Thyroid gland (tissue), 4 donors: ENCODE measurements at regions of chr3 and their contacts with region 1.

Region 1: GRCh38 chr3:134473868-134474546 is 11.8 kb downstream of the ANAPC13 start:
- DNase-seq: peak; percentile 81 to 88
- H3K4me3 ChIP-seq: no peak overlapping the region
- H3K27ac ChIP-seq: peak overlapping the region in 1 of 3 donors; percentile 52
- H3K4me1 ChIP-seq: peaks cover 3 to 27% of the 10 kb centered on the region in 2 donors
- H3K27me3 ChIP-seq: no peaks in the 10 kb centered on the region
- CTCF ChIP-seq: peak; percentile 40 to 93 (median 80)
- POLR2A ChIP-seq: no peak

Region 2: GRCh38 chr3:134212906-134213665 is 260.9 kb before region 1 on chr3:
- intact Hi-C with region 1: loop called (anchors 10 kb)
- DNase-seq: peak; percentile 84 to 90
- H3K4me3 ChIP-seq: no peak overlapping the region
- H3K27ac ChIP-seq: no peak overlapping the region
- H3K4me1 ChIP-seq: peaks cover 0 to 8% of the 10 kb centered on the region in 2 donors
- H3K27me3 ChIP-seq: no peaks in the 10 kb centered on the region
- CTCF ChIP-seq: peak; percentile 92 to 98 (median 94)
- POLR2A ChIP-seq: no peak

Region 3: GRCh38 chr3:134308350-134308891 is 165.6 kb before region 1 on chr3:
- intact Hi-C with region 1: loop called (anchors 2 kb)
- DNase-seq: peak; percentile 85 to 86
- H3K4me3 ChIP-seq: no peak overlapping the region
- H3K27ac ChIP-seq: peak overlapping the region; percentile 79 to 94 (median 90)
- H3K4me1 ChIP-seq: peaks cover 33 to 50% of the 10 kb centered on the region in 2 donors
- H3K27me3 ChIP-seq: no peaks in the 10 kb centered on the region
- CTCF ChIP-seq: peak; percentile 99 to 100 (median 100)
- POLR2A ChIP-seq: no peak

Region 4: GRCh38 chr3:134378384-134378783 is 95.6 kb before region 1 on chr3:
- intact Hi-C with region 1: loop called (anchors 5 kb)
- DNase-seq: peak; percentile 76 to 78
- H3K4me3 ChIP-seq: no peak overlapping the region
- H3K27ac ChIP-seq: peak overlapping the region in 1 of 3 donors; percentile 15
- H3K4me1 ChIP-seq: peaks cover 22 to 33% of the 10 kb centered on the region in 2 donors
- H3K27me3 ChIP-seq: no peaks in the 10 kb centered on the region
- CTCF ChIP-seq: peak in 4 of 6 experiments; percentile 55 to 66 (median 60)
- POLR2A ChIP-seq: no peak

Region 5: DNA sequence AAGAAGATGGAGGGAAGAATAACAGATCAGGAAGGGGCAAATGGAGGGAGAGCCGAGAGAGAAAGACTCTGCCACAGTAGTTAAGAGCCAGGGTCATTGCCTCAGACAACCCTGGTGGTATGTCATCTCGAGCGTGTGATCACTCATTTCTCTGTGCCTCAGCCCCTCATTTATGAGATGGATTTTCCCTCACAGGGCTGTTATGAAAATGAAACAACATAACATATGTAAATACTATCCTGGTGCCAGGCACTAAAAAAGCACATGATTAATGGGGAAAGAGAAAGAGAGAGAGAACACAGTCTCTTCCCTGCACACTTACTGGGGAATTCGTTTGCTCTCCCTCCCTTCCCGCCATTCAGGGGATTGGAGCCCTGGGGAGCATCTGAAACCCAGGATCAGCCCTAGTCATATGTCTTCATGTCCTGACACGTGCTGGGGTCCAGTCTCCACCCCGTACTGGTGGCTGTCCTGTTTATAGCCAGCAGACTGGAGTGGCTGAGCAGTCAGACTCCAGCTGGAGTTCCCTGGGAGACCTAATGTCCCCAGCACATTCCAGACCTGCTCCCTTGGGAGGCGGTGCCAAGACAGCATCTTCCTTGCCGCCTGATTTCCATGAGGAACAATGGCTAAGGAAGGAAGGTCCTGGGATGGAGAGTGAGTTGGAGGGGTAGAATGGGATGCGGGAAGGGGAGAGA is 85.1 kb before region 1 on chr3:
- intact Hi-C with region 1: loop called (anchors 5 kb)
- DNase-seq: no peak
- H3K4me3 ChIP-seq: no peak overlapping the region
- H3K27ac ChIP-seq: no peak overlapping the region
- H3K4me1 ChIP-seq: peaks cover 12 to 18% of the 10 kb centered on the region in 2 donors
- H3K27me3 ChIP-seq: no peaks in the 10 kb centered on the region
- CTCF ChIP-seq: no peak
- POLR2A ChIP-seq: no peak